Heart left ventricle (tissue), 16 donors: ENCODE measurements at regions of chrX and their contacts with region 1.

Region 1: DNA sequence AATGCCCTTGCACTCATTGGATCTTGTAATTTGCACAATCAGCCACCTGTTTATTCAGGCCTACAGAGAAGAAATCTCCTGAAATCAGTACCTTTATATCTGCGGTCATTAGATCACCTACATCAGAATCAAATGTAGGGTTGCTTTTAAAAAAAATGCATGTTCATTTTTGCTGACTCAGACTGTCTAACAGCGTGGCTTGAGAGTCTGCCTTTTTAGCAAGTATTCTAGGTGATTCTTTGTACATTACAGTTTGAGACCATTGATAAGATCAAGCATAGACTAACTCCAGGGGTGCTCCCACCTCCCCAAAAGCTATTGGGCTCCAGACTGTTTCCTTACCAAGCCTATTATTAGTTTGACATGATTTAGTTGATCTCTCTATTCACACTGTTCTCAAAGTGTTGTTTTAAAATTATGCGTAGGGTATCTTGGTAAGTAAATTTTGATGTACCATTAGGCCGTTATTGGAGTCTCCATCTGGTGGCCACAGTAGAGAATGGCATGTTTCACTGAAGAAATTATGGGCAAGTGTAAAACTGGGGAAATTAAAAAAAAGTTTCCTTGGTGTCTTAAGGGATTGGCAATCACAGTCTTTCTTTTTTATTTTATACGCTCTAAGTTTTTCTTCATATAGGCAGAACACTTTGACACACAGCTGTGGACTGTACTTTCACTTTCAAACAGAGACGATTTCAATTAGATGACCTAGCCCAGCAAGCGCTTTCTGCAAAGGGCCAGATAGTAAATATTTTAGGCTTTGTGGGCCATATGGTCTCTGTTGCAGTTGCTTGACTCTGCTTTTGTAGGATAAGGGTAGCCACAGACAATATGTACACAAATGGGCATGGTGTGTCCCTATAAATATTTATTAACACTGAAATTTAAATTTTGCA is 33.7 kb upstream of the MSL3 start:
- DNase-seq: no peak
- ATAC-seq: no peak
- H3K4me3 ChIP-seq: no peak overlapping the region
- H3K27ac ChIP-seq: no peak overlapping the region
- H3K4me1 ChIP-seq: no peaks in the 10 kb centered on the region
- H3K27me3 ChIP-seq: peaks cover 0 to 17% (median 0%) of the 10 kb centered on the region in 9 donors
- CTCF ChIP-seq: peak; percentile 35 to 75 (median 66)
- POLR2A ChIP-seq: no peak

Region 2: DNA sequence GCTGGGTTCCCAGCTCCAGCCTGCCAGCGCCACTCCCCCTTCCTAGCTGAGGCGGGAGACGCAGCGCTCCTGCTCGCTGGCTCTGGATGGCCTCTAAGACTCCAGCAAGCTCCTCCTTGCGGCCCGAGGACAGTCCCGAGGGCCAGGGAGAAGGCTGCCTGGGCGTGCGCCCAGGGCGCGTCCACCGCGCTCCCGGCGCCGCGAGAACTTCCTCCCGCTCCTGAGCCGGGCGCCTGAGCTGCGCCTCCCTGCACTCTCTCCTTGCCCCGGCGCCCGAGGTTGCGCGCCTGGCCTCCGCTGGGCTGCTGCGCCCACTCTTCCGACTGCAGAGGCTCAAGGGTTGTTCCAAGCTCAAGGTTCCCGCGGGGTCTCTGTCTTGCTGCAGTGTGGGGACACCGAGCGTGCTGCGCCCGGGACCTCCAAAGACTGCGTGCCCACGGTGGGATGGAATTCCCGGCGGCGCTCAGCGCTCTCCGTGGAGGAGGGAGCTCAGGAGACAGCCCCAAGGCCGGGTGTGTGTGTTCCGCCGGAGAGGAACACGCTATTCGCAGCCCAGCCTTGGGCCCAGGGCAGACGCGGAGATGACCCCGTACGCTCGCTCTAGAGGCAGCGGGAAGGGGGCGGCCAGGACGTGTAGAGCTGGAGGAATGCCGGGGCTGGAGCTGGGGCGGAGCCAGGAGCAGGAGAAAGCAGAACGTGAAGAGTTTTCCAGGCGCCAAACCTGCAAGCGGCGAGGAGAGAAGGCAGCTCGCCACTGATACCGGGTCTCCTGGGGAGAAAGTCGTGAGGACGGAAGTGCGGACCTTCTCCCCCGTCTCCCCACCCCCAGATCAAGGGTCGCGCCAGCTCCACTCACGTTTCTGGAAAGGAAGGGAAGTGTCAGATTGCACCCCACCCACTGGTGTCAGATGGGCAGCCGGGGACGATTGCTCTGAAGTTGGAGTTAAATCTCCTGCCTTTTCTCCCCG is 58.9 kb before region 1 on chrX and contains the start of gene ARHGAP6:
- intact Hi-C with region 1: loop called in 1 of 10 experiments (anchors 5 kb)
- DNase-seq: peak; percentile 28 to 73 (median 47)
- ATAC-seq: peak in 3 of 4 donors; percentile 74 to 85 (median 82)
- H3K4me3 ChIP-seq: peak within 1 kb of the TSS; percentile 27 to 65 (median 51)
- H3K27ac ChIP-seq: peak within 1 kb of the TSS in 8 of 12 donors; percentile 8 to 80 (median 37)
- H3K4me1 ChIP-seq: peaks cover 0 to 16% (median 0%) of the 10 kb centered on the region in 12 donors
- H3K27me3 ChIP-seq: peaks cover 0 to 66% (median 0%) of the 10 kb centered on the region in 9 donors
- CTCF ChIP-seq: no peak
- POLR2A ChIP-seq: no peak
- total RNA-seq, gene ARHGAP6: 2.1 to 6.6 (median 2.7) TPM

Region 3: GRCh38 chrX:11770320-11770719 is 46.0 kb after region 1 on chrX:
- intact Hi-C with region 1: loop called in 4 of 10 experiments (anchors 2 to 10 kb)
- DNase-seq: peak in 1 of 5 donors; percentile 21
- ATAC-seq: peak in 3 of 4 donors; percentile 34 to 60 (median 57)
- H3K4me3 ChIP-seq: no peak overlapping the region
- H3K27ac ChIP-seq: no peak overlapping the region
- H3K4me1 ChIP-seq: no peaks in the 10 kb centered on the region
- H3K27me3 ChIP-seq: no peaks in the 10 kb centered on the region
- CTCF ChIP-seq: peak; percentile 64 to 85 (median 74)
- POLR2A ChIP-seq: no peak